ENCODE measurements at regions of chr6 and their contacts with region 1.

Region 1: GRCh38 chr6:151690768-151691562 is 116.5 kb upstream of the ESR1 start:
- DNase-seq: peak in 4 of 5 donors; percentile 33 to 48 (median 36)
- H3K4me3 ChIP-seq: peak overlapping the region; percentile 24 to 46
- H3K4me3 Mint-ChIP-seq: peak overlapping the region; percentile 74 to 89 (median 86)
- H3K27ac ChIP-seq: peak overlapping the region; percentile 37
- H3K27ac Mint-ChIP-seq: peak overlapping the region; percentile 76 to 90 (median 81)
- H3K4me1 ChIP-seq: peaks cover 11% of the 10 kb centered on the region
- H3K4me1 Mint-ChIP-seq: peaks cover 9 to 27% (median 24%) of the 10 kb centered on the region in 4 donors
- H3K27me3 ChIP-seq: no peaks in the 10 kb centered on the region
- H3K27me3 Mint-ChIP-seq: no peaks in the 10 kb centered on the region

Region 2: DNA sequence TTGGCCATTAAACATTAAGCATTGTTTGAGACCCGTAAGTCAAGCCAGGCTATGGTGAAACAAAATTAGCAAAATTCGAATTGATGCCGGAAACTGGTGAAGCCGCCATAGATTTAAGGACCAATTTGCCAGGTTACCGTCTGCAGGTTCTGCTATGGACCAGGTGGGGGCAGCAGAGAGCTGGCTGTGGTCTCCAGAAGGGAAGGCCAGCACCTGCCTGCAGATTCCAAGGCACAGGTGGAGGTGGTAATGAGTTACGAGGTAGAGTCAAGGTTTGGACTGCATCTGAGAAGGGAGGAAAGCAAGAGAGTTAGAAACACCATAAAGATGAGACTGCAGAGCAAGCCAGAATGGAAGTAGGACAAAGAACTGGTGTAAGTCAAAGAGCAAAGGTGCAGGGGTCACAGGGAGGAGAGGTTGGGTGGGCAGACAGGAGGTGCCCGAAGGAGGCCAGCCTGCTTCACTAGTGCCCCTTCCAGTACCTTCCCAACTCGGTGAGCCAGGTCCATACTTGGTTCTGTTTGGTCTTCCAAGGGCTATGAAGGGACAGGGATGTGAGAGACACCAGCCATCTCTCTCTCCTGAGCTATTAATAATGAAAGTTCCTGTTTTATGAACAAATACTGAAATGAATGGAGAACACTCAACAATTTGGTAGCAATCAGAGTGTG is 15.1 kb before region 1 on chr6:
- CTCF ChIA-PET with region 1: interaction called, 34 read pairs
- POLR2A ChIA-PET with region 1: no interaction called
- intact Hi-C with region 1: no loop called
- DNase-seq: peak; percentile 46 to 57 (median 48)
- H3K4me3 ChIP-seq: no peak overlapping the region
- H3K4me3 Mint-ChIP-seq: no peak overlapping the region
- H3K27ac ChIP-seq: no peak overlapping the region
- H3K27ac Mint-ChIP-seq: no peak overlapping the region
- H3K4me1 ChIP-seq: no peaks in the 10 kb centered on the region
- H3K4me1 Mint-ChIP-seq: peaks cover 0 to 2% (median under 1%) of the 10 kb centered on the region in 4 donors
- H3K27me3 ChIP-seq: no peaks in the 10 kb centered on the region
- H3K27me3 Mint-ChIP-seq: peaks cover 1 to 4% of the 10 kb centered on the region in 2 donors

Region 3: DNA sequence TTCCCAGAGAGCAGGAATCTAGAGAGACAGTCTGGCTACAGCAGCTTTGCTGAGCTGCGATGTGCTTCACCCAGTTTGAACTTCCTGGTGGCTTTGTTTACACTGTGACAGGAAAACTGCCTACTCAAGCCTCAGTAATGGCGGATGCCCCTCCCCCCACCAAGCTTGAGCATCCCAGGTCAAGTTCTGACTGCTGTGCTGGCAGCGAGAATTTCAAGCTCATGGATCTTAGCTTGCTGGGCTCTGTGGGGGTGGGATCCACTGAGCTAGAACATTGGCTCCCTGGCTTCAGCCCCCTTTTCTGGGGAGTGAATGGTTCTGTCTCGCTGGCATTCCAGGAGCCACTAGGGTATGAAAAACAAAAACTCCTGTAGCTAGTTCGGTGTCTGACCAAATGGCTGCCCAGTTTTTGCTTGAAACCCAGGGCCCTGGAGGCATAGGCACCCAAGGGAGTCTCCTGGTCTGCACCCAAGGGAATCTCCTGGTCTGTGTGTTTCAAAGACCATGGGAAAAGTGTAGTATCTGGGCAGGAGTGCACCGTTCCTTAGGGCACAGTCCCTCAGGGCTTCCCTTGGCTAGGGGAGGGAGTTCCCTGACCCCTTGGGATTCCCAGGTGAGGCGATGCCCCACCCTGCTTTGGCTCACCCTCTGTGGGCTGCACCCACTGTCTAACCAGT is 25.7 kb after region 1 on chr6:
- CTCF ChIA-PET with region 1: interaction called, 4 read pairs
- POLR2A ChIA-PET with region 1: interaction called, 13 read pairs
- intact Hi-C with region 1: no loop called
- DNase-seq: peak in 4 of 5 donors; percentile 12 to 37 (median 20)
- H3K4me3 ChIP-seq: no peak overlapping the region
- H3K4me3 Mint-ChIP-seq: peak overlapping the region in 6 of 8 donors; percentile 11 to 62 (median 40)
- H3K27ac ChIP-seq: peak overlapping the region; percentile 9
- H3K27ac Mint-ChIP-seq: peak overlapping the region in 6 of 7 donors; percentile 77 to 96 (median 84)
- H3K4me1 ChIP-seq: peaks cover 18% of the 10 kb centered on the region
- H3K4me1 Mint-ChIP-seq: peaks cover 6 to 29% (median 19%) of the 10 kb centered on the region in 4 donors
- H3K27me3 ChIP-seq: no peaks in the 10 kb centered on the region
- H3K27me3 Mint-ChIP-seq: peaks cover 0 to 1% of the 10 kb centered on the region in 2 donors

Region 4: DNA sequence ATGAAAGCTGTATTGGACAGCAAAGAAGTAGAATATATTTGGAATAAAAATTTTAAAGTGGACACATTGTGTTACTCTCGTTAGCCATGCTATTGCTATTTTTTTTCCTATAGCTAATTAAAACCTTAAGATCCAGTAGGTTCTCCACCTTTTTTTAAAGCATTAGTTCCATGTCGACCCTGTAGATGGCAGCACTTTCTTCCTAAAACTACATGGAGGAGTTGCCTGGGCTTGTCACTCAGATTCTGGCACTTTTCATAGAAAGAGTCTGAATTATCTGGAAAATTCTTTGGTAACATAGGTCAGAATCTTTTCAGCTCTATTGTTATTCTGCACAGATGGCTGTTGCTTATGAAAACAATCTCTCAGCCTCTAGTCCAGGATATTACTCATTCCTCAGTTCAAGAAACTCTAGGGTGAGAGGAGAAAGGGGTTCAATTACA is 74.5 kb after region 1 on chr6:
- CTCF ChIA-PET with region 1: interaction called, 17 read pairs
- POLR2A ChIA-PET with region 1: no interaction called
- intact Hi-C with region 1: loop called (anchors 2 kb)
- DNase-seq: peak in 4 of 5 donors; percentile 35 to 43 (median 38)
- H3K4me3 ChIP-seq: no peak overlapping the region
- H3K4me3 Mint-ChIP-seq: no peak overlapping the region
- H3K27ac ChIP-seq: no peak overlapping the region
- H3K27ac Mint-ChIP-seq: no peak overlapping the region
- H3K4me1 ChIP-seq: no peaks in the 10 kb centered on the region
- H3K4me1 Mint-ChIP-seq: peaks cover 7 to 13% (median 11%) of the 10 kb centered on the region in 4 donors
- H3K27me3 ChIP-seq: no peaks in the 10 kb centered on the region
- H3K27me3 Mint-ChIP-seq: no peaks in the 10 kb centered on the region

Region 5: GRCh38 chr6:152267967-152268845 is 577.2 kb after region 1 on chr6:
- CTCF ChIA-PET with region 1: interaction called, 12 read pairs
- POLR2A ChIA-PET with region 1: interaction called, 4 read pairs
- intact Hi-C with region 1: loop called (anchors 1 kb)
- DNase-seq: peak in 4 of 5 donors; percentile 17 to 40 (median 24)
- H3K4me3 ChIP-seq: no peak overlapping the region
- H3K4me3 Mint-ChIP-seq: no peak overlapping the region
- H3K27ac ChIP-seq: no peak overlapping the region
- H3K27ac Mint-ChIP-seq: no peak overlapping the region
- H3K4me1 ChIP-seq: no peaks in the 10 kb centered on the region
- H3K4me1 Mint-ChIP-seq: peaks cover 0 to 2% (median 0%) of the 10 kb centered on the region in 4 donors
- H3K27me3 ChIP-seq: no peaks in the 10 kb centered on the region
- H3K27me3 Mint-ChIP-seq: no peaks in the 10 kb centered on the region